ENCODE measurements at regions of chr7 and their contacts with region 1.

Region 1: DNA sequence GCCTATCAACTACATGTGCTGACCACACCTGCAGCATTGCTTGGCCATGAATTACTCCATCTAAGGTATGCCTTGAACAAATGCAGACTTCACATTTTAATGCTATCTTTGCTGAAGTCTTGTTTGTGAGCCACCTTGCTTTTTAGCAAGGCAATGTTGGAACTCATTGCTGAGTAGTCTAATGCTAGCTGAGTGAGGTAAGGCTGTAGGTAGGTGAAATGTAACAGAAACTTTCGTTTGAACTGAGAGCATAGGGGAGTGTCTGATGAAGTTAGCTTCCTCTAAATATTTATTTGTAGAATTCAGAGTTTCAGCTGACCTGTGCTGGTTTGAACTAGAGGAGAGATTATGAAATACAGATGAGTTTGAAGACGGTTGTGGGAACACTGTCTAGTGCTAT is 238.5 kb downstream of the SEMA3A start:
- DNase-seq: no peak
- ATAC-seq: no peak
- H3K4me3 ChIP-seq: no peak overlapping the region
- H3K27ac ChIP-seq: no peak overlapping the region
- H3K4me1 ChIP-seq: no peaks in the 10 kb centered on the region
- H3K27me3 ChIP-seq: no peaks in the 10 kb centered on the region
- CTCF ChIP-seq: no peak

Region 2: GRCh38 chr7:84085147-84085546 is 129.0 kb after region 1 on chr7:
- CTCF ChIA-PET with region 1: no interaction called
- POLR2A ChIA-PET with region 1: no interaction called
- in situ Hi-C with region 1: no loop called
- intact Hi-C with region 1: no loop called
- DNase-seq: no peak
- ATAC-seq: no peak
- H3K4me3 ChIP-seq: no peak overlapping the region
- H3K27ac ChIP-seq: peak overlapping the region; percentile 12; the same call in 1 of the 2 replicates
- H3K4me1 ChIP-seq: peaks cover 4% of the 10 kb centered on the region; the same call in 1 of the 2 replicates
- H3K27me3 ChIP-seq: no peaks in the 10 kb centered on the region
- CTCF ChIP-seq: no peak

Region 3: DNA sequence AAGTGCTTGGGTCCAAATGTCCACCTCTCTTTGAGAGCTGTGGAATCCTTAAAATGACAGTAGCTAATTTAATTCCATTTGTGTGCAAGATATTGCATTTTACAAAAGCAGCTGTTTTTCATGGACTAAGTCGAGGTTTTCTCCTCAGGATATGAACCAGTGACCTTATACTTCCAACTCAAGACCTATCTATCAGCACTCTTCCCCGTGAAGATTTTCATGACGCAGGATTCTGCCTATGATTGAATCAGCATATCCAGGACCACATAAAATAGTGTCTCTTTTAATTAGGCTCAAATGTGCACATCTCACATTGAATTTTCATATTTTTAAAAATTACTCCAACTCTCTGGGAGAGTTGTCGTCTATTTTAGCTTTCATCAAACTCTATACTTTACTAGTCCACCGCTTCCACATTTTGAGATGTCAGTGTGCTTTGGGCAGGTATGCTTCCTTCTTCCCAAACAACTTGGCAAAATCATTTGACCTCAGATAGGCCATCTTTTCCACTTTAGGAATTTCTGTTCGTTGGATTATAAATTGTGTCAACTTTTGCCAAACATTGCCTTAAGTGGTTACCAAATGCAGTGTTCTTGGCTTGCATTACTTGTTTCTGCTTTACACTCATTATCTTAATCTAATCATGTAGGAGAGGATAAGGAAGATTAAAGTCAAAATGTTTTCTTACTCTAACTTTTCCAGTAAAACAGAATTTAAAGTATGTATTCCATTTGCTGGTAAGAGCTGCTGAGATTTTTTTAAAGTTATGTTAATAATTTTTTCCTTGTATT is 199.1 kb after region 1 on chr7:
- CTCF ChIA-PET with region 1: no interaction called
- POLR2A ChIA-PET with region 1: no interaction called
- in situ Hi-C with region 1: no loop called
- intact Hi-C with region 1: no loop called
- DNase-seq: no peak
- ATAC-seq: no peak
- H3K4me3 ChIP-seq: no peak overlapping the region
- H3K27ac ChIP-seq: peak overlapping the region; percentile 54; the same call in 1 of the 2 replicates
- H3K4me1 ChIP-seq: peaks cover 8% of the 10 kb centered on the region; the same call in 1 of the 2 replicates
- H3K27me3 ChIP-seq: no peaks in the 10 kb centered on the region
- CTCF ChIP-seq: no peak

Region 4: GRCh38 chr7:84538268-84538667 is 582.2 kb after region 1 on chr7:
- CTCF ChIA-PET with region 1: interaction called, 12 read pairs
- POLR2A ChIA-PET with region 1: no interaction called
- in situ Hi-C with region 1: no loop called
- intact Hi-C with region 1: no loop called
- DNase-seq: no peak
- ATAC-seq: no peak
- H3K4me3 ChIP-seq: no peak overlapping the region
- H3K27ac ChIP-seq: no peak overlapping the region; the same call in 1 of the 2 replicates
- H3K4me1 ChIP-seq: peaks cover 3% of the 10 kb centered on the region; the same call in 1 of the 2 replicates
- H3K27me3 ChIP-seq: no peaks in the 10 kb centered on the region
- CTCF ChIP-seq: no peak